ENCODE measurements at regions of chr14 and their contacts with region 1.

Region 1: GRCh38 chr14:63203618-63204406 is 431 bp upstream of the RHOJ start:
- DNase-seq: peak; percentile 75 to 93 (median 89)
- ATAC-seq: peak; percentile 91 to 97 (median 94)
- H3K4me3 ChIP-seq: peak overlapping the region; percentile 44 to 80 (median 64)
- H3K27ac ChIP-seq: peak overlapping the region; percentile 82 to 97 (median 94)
- H3K4me1 ChIP-seq: peaks cover 0 to 37% (median 4%) of the 10 kb centered on the region in 12 donors
- H3K27me3 ChIP-seq: no peaks in the 10 kb centered on the region
- CTCF ChIP-seq: peak in 8 of 12 donors; percentile 7 to 49 (median 31)
- POLR2A ChIP-seq: peak in 1 of 2 donors; percentile 33

Region 2: GRCh38 chr14:62247266-62247665 is 956.5 kb before region 1 on chr14:
- intact Hi-C with region 1: no loop called
- DNase-seq: no peak
- ATAC-seq: no peak
- H3K4me3 ChIP-seq: no peak overlapping the region
- H3K27ac ChIP-seq: no peak overlapping the region
- H3K4me1 ChIP-seq: no peaks in the 10 kb centered on the region
- H3K27me3 ChIP-seq: no peaks in the 10 kb centered on the region
- CTCF ChIP-seq: no peak
- POLR2A ChIP-seq: no peak

Region 3: DNA sequence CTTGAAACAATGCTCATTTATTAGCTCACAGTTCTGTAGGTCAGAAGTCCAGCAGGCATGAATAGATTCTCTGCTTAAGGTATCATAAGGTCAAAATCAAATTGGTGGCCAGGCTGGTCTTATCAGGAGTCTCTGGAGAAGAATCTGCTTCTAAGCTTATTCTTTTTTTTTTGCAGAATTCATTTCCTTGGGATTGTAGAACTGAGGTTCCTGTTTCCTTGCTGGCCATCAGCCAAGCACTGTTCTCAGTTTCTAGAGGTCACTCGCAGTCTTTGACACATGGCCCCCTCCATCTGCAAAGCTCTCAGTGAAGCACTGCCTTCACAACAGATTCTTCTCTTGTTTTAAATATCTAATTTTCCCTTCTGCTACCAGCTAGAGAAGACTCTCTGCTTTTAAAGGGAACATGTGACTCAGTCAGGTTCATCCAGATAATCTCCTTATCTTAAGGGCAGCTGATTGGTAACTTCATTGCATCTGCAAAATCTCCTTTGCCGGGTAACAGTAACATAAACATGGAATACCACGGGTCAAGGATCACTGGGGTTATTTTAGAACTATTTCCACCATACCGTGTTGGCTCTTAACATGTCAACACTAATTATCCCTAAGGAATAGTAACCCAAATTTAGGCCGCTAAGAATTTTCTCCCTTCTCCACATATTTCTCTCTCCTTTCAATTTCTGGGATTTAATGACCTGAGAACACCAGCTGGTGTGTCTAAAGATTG is 25.7 kb after region 1 on chr14:
- intact Hi-C with region 1: loop called in 1 of 10 experiments (anchors 2 kb)
- DNase-seq: peak in 4 of 5 donors; percentile 47 to 68 (median 55)
- ATAC-seq: peak in 2 of 4 donors; percentile 47 to 49
- H3K4me3 ChIP-seq: no peak overlapping the region
- H3K27ac ChIP-seq: peak overlapping the region in 3 of 12 donors; percentile 10 to 26 (median 20)
- H3K4me1 ChIP-seq: peaks cover 0 to 28% (median 5%) of the 10 kb centered on the region in 12 donors
- H3K27me3 ChIP-seq: no peaks in the 10 kb centered on the region
- CTCF ChIP-seq: no peak
- POLR2A ChIP-seq: no peak

Region 4: GRCh38 chr14:63437953-63438757 is 234.3 kb after region 1 on chr14:
- intact Hi-C with region 1: no loop called
- DNase-seq: peak in 4 of 5 donors; percentile 40 to 57 (median 54)
- ATAC-seq: peak; percentile 2 to 71 (median 64)
- H3K4me3 ChIP-seq: peak overlapping the region in 8 of 12 donors; percentile 19 to 41 (median 30)
- H3K27ac ChIP-seq: peak overlapping the region in 11 of 12 donors; percentile 44 to 76 (median 61)
- H3K4me1 ChIP-seq: peaks cover 13 to 68% (median 44%) of the 10 kb centered on the region in 12 donors
- H3K27me3 ChIP-seq: no peaks in the 10 kb centered on the region
- CTCF ChIP-seq: peak in 7 of 12 donors; percentile 11 to 40 (median 22)
- POLR2A ChIP-seq: no peak

Region 5: DNA sequence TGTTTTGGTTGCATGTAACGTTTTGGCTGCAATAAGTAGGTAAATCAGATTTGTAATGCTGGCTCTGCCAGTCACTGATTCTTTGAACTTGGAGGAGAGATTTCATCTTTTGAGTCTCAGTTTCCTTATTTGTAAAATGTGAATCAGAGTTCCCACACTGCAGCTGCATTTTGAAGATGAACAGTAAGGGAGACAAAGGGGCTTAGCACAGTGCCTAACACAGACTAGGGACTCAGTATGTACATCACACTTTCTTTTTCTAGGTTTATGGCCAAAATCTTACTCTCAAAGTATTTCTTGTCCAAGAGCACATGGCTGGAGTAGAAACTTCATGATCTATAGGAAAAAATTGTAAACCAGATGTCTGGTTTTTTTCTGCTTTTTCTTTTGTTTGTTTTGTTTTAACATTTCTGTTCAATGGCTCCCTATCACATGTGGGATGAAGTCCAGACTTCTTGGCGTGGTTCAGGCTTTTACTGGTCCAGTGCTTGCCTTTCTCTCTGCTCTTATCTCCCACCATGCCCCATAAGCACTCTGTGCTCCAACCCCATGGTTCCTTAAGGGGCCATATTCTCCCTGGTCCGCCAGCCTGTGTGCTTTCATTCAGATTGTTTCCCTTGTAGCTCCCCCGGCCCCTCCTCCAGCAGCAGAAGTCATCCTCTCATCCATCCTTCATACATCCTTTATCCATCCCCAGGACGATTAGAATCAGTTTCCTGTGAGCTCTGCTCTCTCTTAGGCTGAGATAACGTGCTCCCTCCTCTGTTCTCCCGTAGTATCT is 707.0 kb after region 1 on chr14:
- intact Hi-C with region 1: no loop called
- DNase-seq: no peak
- ATAC-seq: no peak
- H3K4me3 ChIP-seq: no peak overlapping the region
- H3K27ac ChIP-seq: no peak overlapping the region
- H3K4me1 ChIP-seq: peaks cover 0 to 31% (median 14%) of the 10 kb centered on the region in 12 donors
- H3K27me3 ChIP-seq: peaks cover 0 to 3% (median 0%) of the 10 kb centered on the region in 9 donors
- CTCF ChIP-seq: no peak
- POLR2A ChIP-seq: no peak

Measured in heart left ventricle (tissue), 16 donors.